Endothelial cell of umbilical vein (primary cell): ENCODE measurements at regions of chr7 and their contacts with region 1.

Region 1: GRCh38 chr7:1059200-1060091 is 15.1 kb downstream of the GPR146 start:
- DNase-seq: peak; percentile 64
- H3K4me3 ChIP-seq: no peak overlapping the region
- H3K27ac ChIP-seq: peak overlapping the region; percentile 49
- H3K4me1 ChIP-seq: peaks cover 31% of the 10 kb centered on the region
- H3K27me3 ChIP-seq: no peaks in the 10 kb centered on the region
- CTCF ChIP-seq: no peak
- POLR2A ChIP-seq: no peak

Region 2: DNA sequence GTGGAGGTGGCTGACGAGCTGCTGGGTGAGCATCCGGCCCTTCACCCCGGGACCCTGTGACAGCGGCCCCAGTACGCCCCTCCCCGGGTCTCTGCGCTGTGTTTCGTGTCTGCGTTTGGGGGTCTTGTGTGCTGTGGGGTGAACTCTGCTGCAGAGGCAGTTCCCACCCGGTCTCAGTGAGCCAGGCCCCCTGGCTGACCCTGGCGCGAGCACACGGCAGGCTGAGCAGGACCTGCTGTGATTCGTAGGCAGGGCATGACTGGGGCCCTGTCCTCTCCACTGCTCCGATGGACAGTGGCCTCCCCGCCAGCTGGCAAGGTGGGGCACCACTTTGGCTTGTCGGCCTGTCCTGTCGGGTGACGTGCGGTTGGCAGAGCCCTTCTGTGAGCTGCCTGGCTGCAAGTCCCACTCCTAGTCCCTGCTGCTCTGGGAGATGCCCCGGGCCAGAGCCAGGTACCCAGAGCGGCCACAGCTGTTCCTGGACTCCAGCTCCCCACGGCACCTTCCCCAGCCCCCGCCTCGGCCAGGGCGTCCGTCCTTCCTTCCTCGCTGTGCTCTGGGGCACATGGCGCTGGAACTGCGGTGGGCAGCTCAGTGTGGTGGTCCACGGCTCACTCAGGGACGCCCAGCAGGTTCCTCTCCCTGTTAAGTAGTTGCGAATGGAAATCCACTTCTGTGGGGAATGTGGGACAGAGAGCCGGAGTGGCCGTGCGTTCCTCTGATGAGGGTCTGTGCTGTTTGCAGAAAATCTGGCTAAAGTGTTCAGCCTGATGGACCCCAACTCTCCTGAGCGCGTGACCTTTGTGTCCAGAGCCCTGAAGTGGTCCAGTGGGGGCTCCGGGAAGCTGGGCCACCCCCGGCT is 172.6 kb before region 1 on chr7:
- CTCF ChIA-PET with region 1: no interaction called
- POLR2A ChIA-PET with region 1: no interaction called
- dilution Hi-C with region 1: no loop called
- intact Hi-C with region 1: no loop called
- DNase-seq: no peak
- H3K4me3 ChIP-seq: no peak overlapping the region
- H3K27ac ChIP-seq: no peak overlapping the region
- H3K4me1 ChIP-seq: no peaks in the 10 kb centered on the region
- H3K27me3 ChIP-seq: no peaks in the 10 kb centered on the region
- CTCF ChIP-seq: no peak
- POLR2A ChIP-seq: no peak

Region 3: GRCh38 chr7:909358-910329 is 149.8 kb before region 1 on chr7:
- CTCF ChIA-PET with region 1: no interaction called
- POLR2A ChIA-PET with region 1: no interaction called
- dilution Hi-C with region 1: no loop called
- intact Hi-C with region 1: loop called (anchors 5 kb)
- DNase-seq: no peak
- H3K4me3 ChIP-seq: no peak overlapping the region
- H3K27ac ChIP-seq: no peak overlapping the region
- H3K4me1 ChIP-seq: no peaks in the 10 kb centered on the region
- H3K27me3 ChIP-seq: peaks cover 6 to 9% of the 10 kb centered on the region in 2 experiments
- CTCF ChIP-seq: no peak
- POLR2A ChIP-seq: no peak

Region 4: GRCh38 chr7:1028031-1028770 is 31.2 kb before region 1 on chr7:
- CTCF ChIA-PET with region 1: interaction called, 35 read pairs
- POLR2A ChIA-PET with region 1: no interaction called
- dilution Hi-C with region 1: no loop called
- intact Hi-C with region 1: loop called (anchors 1 kb)
- DNase-seq: peak; percentile 88
- H3K4me3 ChIP-seq: peak overlapping the region; percentile 5 to 80 (median 51)
- H3K27ac ChIP-seq: peak overlapping the region; percentile 31
- H3K4me1 ChIP-seq: peaks cover 8% of the 10 kb centered on the region
- H3K27me3 ChIP-seq: no peaks in the 10 kb centered on the region
- CTCF ChIP-seq: no peak
- POLR2A ChIP-seq: peak; percentile 34

Region 5: GRCh38 chr7:1044191-1045068 is 15.0 kb before region 1 on chr7 and contains the start of gene GPR146:
- CTCF ChIA-PET with region 1: interaction called, 46 read pairs
- POLR2A ChIA-PET with region 1: no interaction called
- dilution Hi-C with region 1: no loop called
- intact Hi-C with region 1: loop called (anchors 2 kb)
- DNase-seq: peak; percentile 95
- H3K4me3 ChIP-seq: peak within 1 kb of the TSS; percentile 22 to 67 (median 57)
- H3K27ac ChIP-seq: peak within 1 kb of the TSS; percentile 54
- H3K4me1 ChIP-seq: peaks cover 24% of the 10 kb centered on the region
- H3K27me3 ChIP-seq: no peaks in the 10 kb centered on the region
- CTCF ChIP-seq: peak; percentile 58 to 82
- POLR2A ChIP-seq: peak; percentile 33
- total RNA-seq, gene GPR146: 11.7 and 18.5 TPM in 2 replicates